Activated CD4-positive, alpha-beta T cell treated with anti-CD3 and anti-CD28 coated beads, Interleukin-2, amount 10 ng/mL, durations not matched to agents 24 days and 14 days (primary cell): ENCODE measurements at regions of chr16 and their contacts with region 1.

Region 1: DNA sequence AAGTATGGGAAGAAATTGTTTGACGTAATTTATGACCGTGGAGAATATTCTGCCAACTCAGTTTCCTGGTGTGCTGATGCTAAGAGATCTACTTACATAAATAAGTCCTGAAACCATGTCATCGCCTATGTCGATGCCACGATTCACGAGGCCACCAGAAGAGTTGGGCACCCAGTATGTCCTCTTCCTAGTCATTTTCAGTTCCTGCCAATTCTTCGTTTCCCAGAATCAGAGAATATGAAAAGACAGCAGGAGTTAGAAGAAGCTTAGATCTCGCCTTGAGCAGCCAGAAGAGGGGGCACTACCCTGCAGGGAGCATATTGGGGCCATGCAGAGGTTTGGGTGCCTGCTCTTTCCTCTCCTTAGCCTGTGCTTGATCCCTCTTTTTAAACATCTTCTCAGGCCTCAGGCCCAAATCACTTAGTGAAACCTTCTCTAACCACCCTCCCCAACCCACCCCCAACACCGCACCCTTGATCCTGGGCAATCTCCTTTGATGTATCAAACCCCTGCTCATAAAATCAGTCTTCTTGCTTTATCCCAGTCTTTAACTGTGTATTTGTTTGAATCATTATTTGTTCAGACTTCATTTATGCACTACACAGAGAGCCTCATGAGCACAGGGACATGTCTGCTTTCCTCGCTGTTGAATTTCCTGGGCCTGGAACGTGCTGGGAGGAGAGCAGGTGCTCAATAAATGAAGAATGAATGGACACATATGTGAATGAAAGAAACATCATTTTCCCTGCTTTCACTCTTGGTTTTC is 12.2 kb upstream of the LONP2 start:
- DNase-seq: peak; percentile 84
- H3K4me3 Mint-ChIP-seq: peak overlapping the region; percentile 39
- H3K27ac Mint-ChIP-seq: peak overlapping the region; percentile 76
- H3K4me1 Mint-ChIP-seq: peaks cover 21% of the 10 kb centered on the region
- H3K27me3 Mint-ChIP-seq: peaks cover 2% of the 10 kb centered on the region

Region 2: GRCh38 chr16:48244080-48244862 is 12.4 kb after region 1 on chr16 and contains the start of gene LONP2:
- intact Hi-C with region 1: loop called (anchors 1 kb)
- DNase-seq: peak; percentile 98
- H3K4me3 Mint-ChIP-seq: peak within 1 kb of the TSS; percentile 90
- H3K27ac Mint-ChIP-seq: peak within 1 kb of the TSS; percentile 91
- H3K4me1 Mint-ChIP-seq: peaks cover 16% of the 10 kb centered on the region
- H3K27me3 Mint-ChIP-seq: peaks cover 2% of the 10 kb centered on the region
- total RNA-seq, gene LONP2: 57.3 and 58.9 TPM in 2 replicates

Region 3: DNA sequence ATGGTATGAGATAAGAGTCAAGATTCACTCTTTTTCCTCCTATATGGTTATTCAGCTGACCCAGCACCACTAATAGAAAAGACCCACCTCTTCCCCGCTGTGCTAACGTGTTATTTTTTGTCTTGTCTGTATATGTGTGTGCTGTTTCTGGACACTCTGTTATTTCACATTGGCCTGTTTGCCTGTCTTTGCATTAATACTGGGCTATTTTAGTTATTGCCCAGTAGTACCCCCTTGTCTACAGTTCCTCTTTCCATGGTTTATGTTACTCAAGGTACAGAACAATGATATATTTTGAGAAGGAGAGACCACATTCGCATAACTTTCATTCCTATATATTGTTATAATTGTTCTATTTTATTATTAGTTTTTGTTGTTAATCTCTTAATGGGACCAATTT is 227.3 kb after region 1 on chr16:
- intact Hi-C with region 1: loop called (anchors 5 kb)
- DNase-seq: no peak
- H3K4me3 Mint-ChIP-seq: no peak overlapping the region
- H3K27ac Mint-ChIP-seq: peak overlapping the region; percentile 22
- H3K4me1 Mint-ChIP-seq: peaks cover 12% of the 10 kb centered on the region
- H3K27me3 Mint-ChIP-seq: peaks cover 24% of the 10 kb centered on the region

Region 4: DNA sequence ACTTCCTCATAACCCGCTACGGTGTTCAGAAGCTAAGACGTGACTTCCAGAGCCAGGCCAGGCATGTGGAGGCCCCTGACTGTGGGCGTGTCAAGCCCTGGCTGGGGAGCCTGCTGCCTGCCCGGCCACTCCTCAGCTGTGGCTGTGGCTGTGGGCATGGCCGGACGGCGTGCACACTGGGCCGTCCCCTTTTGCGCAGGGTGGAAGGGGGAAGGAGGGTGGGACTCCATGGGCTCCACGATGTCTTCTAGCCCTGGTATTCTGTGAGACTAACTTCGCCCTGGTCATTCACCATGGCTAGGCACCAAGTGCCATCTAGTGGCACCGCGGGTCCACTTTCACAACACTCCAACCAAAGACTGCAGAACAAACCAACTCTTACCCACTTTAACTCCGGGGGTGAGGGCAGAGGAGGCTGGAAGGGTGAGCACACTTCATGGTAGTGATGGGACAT is 310.1 kb after region 1 on chr16:
- intact Hi-C with region 1: loop called (anchors 1 kb)
- DNase-seq: peak; percentile 65
- H3K4me3 Mint-ChIP-seq: no peak overlapping the region
- H3K27ac Mint-ChIP-seq: no peak overlapping the region
- H3K4me1 Mint-ChIP-seq: peaks cover 14% of the 10 kb centered on the region
- H3K27me3 Mint-ChIP-seq: no peaks in the 10 kb centered on the region

Region 5: DNA sequence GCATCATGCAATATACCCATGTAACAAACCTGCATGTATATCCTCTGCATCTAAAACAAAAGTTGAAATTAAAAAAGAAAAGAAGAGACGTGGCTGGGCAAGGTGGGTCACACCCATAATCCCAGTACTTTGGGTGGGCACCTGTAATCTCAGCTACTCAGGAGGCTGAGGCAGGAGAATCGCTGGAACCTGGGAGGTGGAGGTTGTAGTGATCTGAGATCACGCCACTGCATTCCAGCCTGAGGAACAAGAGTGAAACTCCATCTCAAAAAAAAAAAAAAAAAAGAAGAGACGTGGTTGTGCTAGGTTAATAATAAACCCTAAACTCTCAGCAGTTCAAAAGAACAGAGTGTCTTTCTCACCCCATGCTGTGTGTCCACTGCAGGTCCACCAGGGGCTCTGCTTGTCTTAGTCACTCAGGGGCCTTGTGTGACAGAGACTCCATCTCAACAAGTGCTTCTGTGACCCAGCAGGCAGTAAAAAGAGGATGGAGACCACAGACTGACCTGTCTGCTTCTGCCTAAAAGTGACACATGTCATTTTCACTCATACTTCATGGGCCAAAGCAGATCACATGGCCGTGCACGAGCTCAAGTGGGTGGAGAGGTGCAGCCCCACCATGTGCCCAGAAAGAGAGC is 400.3 kb after region 1 on chr16:
- intact Hi-C with region 1: loop called (anchors 1 kb)
- DNase-seq: peak; percentile 48
- H3K4me3 Mint-ChIP-seq: no peak overlapping the region
- H3K27ac Mint-ChIP-seq: no peak overlapping the region
- H3K4me1 Mint-ChIP-seq: peaks cover 7% of the 10 kb centered on the region
- H3K27me3 Mint-ChIP-seq: peaks cover 2% of the 10 kb centered on the region